HEK293T (cell line): ENCODE measurements at regions of chr4 and their contacts with region 1.

Region 1: DNA sequence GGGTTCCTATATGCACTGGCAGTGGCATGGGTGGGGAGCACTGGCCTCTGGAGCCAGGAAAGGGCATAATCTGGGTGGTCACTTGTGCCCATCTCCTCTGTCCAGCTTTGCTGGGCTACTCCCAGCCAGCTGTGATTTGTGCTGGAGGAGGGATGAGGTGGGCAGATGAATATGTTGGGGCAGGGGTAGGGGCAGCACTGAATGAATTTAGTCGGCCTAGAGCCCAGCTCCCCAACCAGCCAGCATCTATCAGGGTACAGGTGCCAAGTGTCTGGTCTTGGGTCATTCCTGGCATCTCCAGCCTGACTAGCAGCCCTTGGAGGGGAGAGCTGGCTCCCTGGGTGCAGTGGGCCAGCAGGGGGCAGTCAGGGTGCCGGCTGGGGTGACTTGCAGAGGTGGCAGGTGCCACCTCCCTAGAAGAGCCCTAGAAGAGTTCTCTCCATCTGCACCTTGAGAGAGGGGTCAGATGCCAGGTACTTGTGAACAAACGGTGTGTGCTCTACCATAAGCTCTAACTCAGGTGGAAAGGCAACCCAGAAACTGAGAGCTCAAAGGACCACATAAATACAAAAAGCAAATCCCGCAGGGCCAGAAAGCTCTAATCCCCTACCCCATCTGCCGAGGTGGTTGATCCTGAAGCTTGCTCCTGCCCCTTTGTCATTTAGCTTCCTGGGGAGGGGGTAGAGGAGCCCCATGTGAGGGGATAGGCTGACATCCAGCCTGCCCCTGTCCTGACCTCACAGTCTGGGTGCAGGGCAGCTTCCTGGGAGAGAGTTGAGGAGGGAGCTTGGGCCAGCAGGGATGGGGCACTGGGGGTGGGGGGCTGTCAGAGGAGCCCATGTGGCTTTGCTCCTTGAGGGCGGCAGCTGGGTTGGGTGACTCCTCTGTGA is 2.2 kb downstream of the SORCS2 start:
- DNase-seq: no peak

Region 2: GRCh38 chr4:5399790-5400421 is 1794.6 kb before region 1 on chr4:
- CTCF ChIA-PET with region 1: no interaction called
- POLR2A ChIA-PET with region 1: no interaction called
- DNase-seq: peak; percentile 64

Region 3: GRCh38 chr4:7206911-7207567 is 12.5 kb after region 1 on chr4:
- CTCF ChIA-PET with region 1: interaction called, 10 read pairs
- POLR2A ChIA-PET with region 1: interaction called, 3 read pairs
- DNase-seq: peak; percentile 47

Region 4: DNA sequence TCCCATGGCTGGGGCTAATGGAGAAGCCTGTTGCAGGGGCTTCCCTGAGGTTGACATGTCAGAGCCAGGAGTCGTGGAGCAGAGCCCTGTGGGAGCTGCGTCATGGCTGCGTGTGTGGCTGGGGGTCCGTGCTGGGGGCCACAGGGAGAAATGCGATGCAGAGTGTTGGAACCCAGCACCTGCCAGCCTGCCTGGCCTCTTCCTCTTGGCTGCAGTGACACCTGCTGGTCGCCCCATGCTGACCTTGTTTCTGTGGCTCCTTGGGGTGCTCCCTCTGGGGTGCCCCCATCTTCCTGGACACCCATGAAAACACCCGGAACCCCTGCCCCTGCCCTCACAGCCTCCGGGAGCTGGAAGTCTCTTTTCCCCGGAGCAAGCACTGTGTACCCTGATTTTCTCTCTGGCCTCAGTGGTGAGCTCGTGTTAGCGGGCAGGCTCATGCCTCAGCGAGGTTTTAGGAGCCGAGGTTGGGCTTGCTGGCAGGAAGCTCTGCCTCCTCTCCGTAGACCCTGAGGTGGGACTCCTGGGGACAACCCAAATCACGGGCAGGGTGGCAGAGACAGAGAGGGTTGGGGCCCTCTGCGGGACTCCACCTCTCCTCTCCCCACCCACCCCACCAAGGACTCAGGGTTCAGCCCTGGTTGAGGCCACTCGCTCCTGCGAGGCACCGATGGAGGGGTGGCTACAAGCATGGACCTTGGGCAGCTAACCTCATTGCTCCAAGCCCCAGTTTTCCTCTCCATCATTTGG is 101.6 kb after region 1 on chr4:
- CTCF ChIA-PET with region 1: interaction called, 15 read pairs
- POLR2A ChIA-PET with region 1: no interaction called
- DNase-seq: peak; percentile 32